ENCODE measurements at regions of chr11 and their contacts with region 1.

Region 1: DNA sequence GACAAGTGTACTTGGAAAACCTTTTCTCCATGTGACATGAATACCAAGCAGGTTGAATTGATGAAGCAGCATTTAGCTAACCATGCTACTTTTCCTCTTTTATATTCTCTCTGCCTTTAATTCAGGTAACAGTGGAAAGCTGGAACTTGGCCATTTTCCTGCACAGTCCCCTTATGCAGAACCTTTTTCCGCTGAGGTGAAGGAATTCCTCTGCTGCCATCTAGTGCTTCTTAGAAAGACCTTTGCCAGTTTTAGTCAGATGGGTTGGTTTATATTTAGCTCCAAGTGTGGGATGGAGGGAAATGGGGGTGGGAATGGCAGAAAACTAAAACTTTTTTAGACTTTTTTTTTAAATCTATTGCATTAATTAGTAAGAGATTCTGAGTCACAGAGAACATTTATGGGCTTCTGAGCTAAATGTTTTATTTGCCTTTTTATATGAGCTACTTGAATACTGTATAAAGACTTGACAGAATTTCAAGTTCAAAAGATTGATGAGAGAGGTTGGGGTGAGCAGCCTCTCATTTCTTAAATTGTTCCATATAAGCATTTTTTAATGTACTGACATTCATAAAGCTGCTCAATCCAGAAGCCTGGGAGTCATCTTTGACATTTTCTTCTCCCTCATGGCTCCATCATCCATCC is 153.9 kb upstream of the ZC3H12C start:
- DNase-seq: peak; percentile 80
- H3K4me3 ChIP-seq: no peak overlapping the region
- H3K27ac ChIP-seq: no peak overlapping the region
- H3K4me1 ChIP-seq: no peaks in the 10 kb centered on the region
- H3K27me3 ChIP-seq: no peaks in the 10 kb centered on the region
- CTCF ChIP-seq: peak; percentile 57 to 61
- POLR2A ChIP-seq: no peak

Region 2: GRCh38 chr11:108697872-108698473 is 1241.3 kb before region 1 on chr11:
- CTCF ChIA-PET with region 1: interaction called, 17 read pairs
- POLR2A ChIA-PET with region 1: no interaction called
- dilution Hi-C with region 1: no loop called
- intact Hi-C with region 1: loop called (anchors 1 kb)
- DNase-seq: peak; percentile 78
- H3K4me3 ChIP-seq: no peak overlapping the region
- H3K27ac ChIP-seq: no peak overlapping the region
- H3K4me1 ChIP-seq: no peaks in the 10 kb centered on the region
- H3K27me3 ChIP-seq: no peaks in the 10 kb centered on the region
- CTCF ChIP-seq: peak; percentile 78 to 79
- POLR2A ChIP-seq: no peak

Region 3: GRCh38 chr11:109582470-109582869 is 356.8 kb before region 1 on chr11:
- CTCF ChIA-PET with region 1: no interaction called
- POLR2A ChIA-PET with region 1: no interaction called
- dilution Hi-C with region 1: no loop called
- intact Hi-C with region 1: no loop called
- DNase-seq: no peak
- H3K4me3 ChIP-seq: no peak overlapping the region
- H3K27ac ChIP-seq: no peak overlapping the region
- H3K4me1 ChIP-seq: no peaks in the 10 kb centered on the region
- H3K27me3 ChIP-seq: no peaks in the 10 kb centered on the region
- CTCF ChIP-seq: no peak
- POLR2A ChIP-seq: no peak

Region 4: DNA sequence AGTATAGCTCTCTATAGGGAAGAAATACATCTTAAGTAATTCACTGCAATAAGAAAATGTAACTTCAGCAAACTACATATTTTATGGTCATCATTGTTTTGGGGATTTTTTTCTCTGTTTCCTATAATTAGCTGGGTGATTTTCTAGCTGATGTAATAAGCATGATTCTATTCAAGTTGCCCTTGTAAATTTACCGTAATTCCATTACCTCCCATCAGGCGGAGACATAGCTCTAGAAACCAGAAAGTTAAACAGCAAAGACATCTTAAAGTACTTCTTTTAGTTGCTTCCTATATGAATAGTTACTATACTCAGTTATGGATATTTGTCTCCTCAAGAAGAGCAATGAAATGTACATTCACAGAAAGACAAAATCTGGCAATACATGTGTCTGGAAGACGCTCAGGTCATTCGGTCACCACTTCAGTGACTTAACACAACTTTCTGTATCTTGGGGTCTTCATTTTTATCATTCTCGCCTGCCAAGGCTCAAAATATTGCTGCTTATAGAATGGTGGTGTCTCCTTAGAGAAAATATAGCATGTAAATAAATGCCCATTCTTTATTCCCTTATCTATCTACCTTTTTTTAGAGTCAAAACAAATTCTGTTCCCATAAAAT is 86.0 kb before region 1 on chr11:
- CTCF ChIA-PET with region 1: interaction called, 370 read pairs
- POLR2A ChIA-PET with region 1: interaction called, 3 read pairs
- dilution Hi-C with region 1: no loop called
- intact Hi-C with region 1: loop called (anchors 1 kb)
- DNase-seq: peak; percentile 90
- H3K4me3 ChIP-seq: no peak overlapping the region
- H3K27ac ChIP-seq: no peak overlapping the region
- H3K4me1 ChIP-seq: no peaks in the 10 kb centered on the region
- H3K27me3 ChIP-seq: peaks cover 0 to 1% of the 10 kb centered on the region in 2 experiments
- CTCF ChIP-seq: peak; percentile 48 to 53
- POLR2A ChIP-seq: no peak

Region 5: DNA sequence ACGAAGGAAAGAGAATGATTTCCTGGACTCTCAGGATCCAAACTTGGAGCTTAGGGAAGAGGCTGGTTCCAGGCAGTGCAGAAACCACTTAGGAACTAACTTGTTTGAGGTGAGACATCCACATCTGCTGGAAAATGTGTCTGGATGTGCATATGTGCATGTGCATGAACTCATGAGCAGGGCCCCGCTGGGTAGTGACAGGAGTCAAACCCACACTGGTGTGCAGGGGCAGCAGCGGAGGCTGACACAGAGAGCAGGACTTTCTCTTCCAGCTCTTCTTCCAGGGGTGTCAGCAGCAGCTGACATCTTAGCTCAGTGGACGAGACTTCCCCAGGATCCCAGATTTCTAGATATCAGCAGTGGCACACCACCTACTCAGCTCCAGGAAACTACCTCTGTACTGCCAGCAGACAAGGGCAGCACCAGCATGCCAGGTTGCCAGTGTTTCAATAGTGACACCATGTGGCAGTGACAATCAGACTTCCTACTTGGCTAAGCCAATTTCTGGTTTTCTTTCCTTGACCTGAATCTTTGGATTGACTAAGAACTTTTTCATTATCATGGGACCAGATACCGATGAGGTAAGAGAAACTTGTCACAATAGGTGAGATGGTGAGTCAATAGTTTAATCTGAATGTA is 73.6 kb before region 1 on chr11:
- CTCF ChIA-PET with region 1: interaction called, 23 read pairs
- POLR2A ChIA-PET with region 1: no interaction called
- dilution Hi-C with region 1: no loop called
- intact Hi-C with region 1: no loop called
- DNase-seq: no peak
- H3K4me3 ChIP-seq: no peak overlapping the region
- H3K27ac ChIP-seq: no peak overlapping the region
- H3K4me1 ChIP-seq: peaks cover 23% of the 10 kb centered on the region
- H3K27me3 ChIP-seq: no peaks in the 10 kb centered on the region
- CTCF ChIP-seq: no peak
- POLR2A ChIP-seq: no peak

Region 6: DNA sequence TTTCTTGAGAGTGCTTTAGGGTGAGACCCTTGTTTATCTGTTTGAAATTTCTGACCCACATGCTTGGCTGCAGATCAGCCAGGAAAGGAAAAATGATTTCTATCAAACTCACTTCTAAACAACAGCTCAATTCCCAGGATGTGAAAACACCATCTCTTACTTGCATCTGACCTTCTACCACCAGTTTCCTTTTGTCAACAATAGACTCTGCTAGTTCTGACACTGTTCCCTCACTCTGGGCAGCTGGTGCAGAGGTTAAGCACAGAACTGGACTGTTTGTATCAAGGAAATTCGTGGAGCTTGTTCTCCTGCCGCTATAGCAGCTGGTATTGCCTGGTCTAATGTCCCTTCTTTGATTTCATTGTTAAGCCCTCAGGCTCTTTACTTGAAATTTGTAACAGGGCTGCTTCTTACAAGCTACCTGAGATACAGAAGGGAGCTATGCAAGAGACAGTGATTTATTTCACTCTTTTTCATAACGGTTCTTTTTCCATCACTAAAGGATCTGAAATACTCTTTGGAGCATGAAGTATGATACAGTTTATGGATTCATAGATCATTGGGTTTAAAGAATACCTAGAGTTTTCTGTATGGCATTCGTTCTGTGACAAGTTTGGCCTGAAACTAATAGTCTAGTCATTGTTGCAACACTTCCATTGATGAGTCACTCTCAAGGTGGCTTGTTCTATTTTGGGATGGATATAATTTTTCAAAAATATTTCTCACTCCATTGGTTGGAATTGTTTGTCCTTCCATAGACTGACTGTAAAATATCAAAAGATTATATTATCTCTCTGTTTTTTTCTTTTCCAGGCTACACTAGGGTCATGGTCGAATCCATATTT is 24.3 kb before region 1 on chr11:
- CTCF ChIA-PET with region 1: interaction called, 24 read pairs
- POLR2A ChIA-PET with region 1: no interaction called
- dilution Hi-C with region 1: no loop called
- intact Hi-C with region 1: no loop called
- DNase-seq: peak; percentile 94
- H3K4me3 ChIP-seq: peak overlapping the region in 1 of 3 experiments; percentile 40
- H3K27ac ChIP-seq: peak overlapping the region; percentile 94
- H3K4me1 ChIP-seq: peaks cover 23% of the 10 kb centered on the region
- H3K27me3 ChIP-seq: no peaks in the 10 kb centered on the region
- CTCF ChIP-seq: no peak
- POLR2A ChIP-seq: peak; percentile 35

Measured in endothelial cell of umbilical vein (primary cell).